ENCODE measurements at regions of chr19 and their contacts with region 1.

Region 1: DNA sequence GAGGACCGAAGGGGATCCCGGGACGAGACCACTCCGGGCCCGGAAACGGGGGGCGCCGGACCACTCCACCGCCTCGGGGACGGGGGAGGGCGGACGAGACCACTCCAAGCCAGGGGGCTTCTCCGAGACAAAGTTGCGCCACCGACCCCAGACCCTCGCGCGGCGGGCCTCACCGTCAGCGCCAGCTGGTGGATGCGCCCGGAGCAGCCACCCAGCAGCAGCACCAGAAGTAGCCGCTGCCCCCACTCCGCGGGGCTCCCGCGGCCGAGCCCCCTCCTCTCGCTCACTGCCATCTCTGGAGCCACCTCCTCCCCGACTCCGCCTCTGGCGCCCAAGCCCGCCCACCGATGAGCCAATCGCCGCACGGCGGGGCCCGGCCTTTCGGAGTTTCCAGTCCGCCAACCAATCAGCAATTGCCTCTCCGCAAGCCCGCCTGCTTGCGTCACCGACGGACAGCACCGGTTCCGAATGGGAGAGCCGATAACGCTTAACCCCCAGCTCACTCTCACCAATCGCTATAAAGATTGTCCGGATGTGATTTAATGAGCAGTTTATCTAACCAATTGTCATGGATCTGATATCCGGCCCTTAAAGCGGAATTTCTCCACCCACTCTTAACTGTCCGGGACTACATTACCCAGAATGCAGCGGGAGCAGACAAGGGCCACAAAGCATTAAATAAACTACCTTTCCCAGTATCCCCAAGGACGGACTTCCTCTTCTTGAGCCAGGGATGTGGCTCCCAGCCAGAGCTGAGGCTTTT is at the start of gene GPR108:
- DNase-seq: peak; percentile 100
- ATAC-seq: peak; percentile 75
- H3K4me3 ChIP-seq: peak within 1 kb of the TSS; percentile 58
- H3K27ac ChIP-seq: peak within 1 kb of the TSS; percentile 89
- H3K4me1 ChIP-seq: peaks cover 13% of the 10 kb centered on the region
- H3K27me3 ChIP-seq: no peaks in the 10 kb centered on the region
- CTCF ChIP-seq: no peak
- POLR2A ChIP-seq: no peak
- RAD21 ChIP-seq: no peak
- total RNA-seq, gene GPR108: 17.5 and 28.0 TPM in 2 replicates

Region 2: DNA sequence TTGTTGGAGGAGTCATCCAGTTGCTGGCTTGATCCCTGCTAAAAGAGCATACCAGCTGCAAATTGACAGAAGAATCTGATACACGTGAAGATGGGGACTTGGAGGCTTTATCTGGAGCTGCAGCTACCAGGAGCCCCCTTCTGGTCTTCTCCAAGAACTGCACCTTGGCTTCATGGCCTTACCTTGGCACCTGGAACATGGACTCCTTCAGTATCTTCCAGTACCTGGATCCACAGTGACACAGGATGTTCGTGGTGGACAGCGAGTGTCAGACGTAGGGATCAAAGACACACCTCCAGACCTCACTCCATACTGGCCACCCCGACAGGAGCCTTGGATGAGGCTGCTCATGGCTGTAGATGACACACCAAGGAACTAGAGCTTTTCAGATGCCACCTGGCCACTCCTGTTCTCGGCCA is 611.9 kb before region 1 on chr19:
- CTCF ChIA-PET with region 1: no interaction called
- POLR2A ChIA-PET with region 1: no interaction called
- dilution Hi-C with region 1: no loop called
- in situ Hi-C with region 1: no loop called
- intact Hi-C with region 1: loop called (anchors 5 kb)
- DNase-seq: peak; percentile 77
- ATAC-seq: peak; percentile 78
- H3K4me3 ChIP-seq: no peak overlapping the region
- H3K27ac ChIP-seq: no peak overlapping the region
- H3K4me1 ChIP-seq: no peaks in the 10 kb centered on the region
- H3K27me3 ChIP-seq: no peaks in the 10 kb centered on the region
- CTCF ChIP-seq: peak; percentile 88
- POLR2A ChIP-seq: no peak
- RAD21 ChIP-seq: peak; percentile 98

Region 3: DNA sequence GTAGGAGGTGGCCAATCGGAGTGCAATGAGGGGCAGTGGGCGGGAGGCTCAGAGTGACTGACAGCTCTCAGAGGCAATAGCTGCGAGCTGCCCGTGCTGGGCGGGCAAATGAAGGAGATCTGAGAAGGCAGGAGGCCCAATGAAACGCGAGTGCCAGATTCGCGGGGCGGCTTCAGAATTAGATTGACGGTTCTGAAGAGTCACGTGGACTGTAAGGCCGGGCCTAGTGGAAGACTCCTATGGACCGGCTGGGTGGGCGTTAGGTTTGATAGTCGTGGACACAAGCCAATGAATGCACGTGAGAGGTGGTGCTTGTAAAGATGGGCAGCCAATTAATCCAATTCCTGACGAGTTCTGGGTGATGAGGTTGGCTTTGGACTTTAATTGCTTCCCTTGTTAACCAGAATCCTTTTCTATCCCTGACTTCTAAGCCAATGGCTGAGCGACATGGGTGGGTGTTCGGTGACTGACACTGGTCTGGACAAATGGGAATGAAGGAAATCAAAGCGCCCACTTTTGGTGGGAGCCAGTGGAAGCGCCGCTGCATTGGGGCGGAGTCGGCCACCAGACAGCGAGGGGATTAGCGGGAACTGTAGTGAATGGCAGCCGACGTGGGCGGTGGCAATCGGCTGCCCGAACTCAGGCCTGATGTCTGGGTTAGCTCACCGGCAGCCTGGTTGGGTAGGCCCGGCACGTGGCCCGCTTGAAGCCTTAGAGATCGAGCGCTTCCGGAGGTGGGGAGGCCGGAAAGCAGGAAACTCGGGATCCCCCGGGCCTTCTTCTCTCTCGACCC is 312.3 kb before region 1 on chr19:
- CTCF ChIA-PET with region 1: no interaction called
- POLR2A ChIA-PET with region 1: no interaction called
- dilution Hi-C with region 1: no loop called
- in situ Hi-C with region 1: no loop called
- intact Hi-C with region 1: loop called (anchors 2 kb)
- DNase-seq: peak; percentile 100
- ATAC-seq: peak; percentile 89
- H3K4me3 ChIP-seq: no peak overlapping the region
- H3K27ac ChIP-seq: peak overlapping the region; percentile 40
- H3K4me1 ChIP-seq: peaks cover 2% of the 10 kb centered on the region; the same call in 1 of the 2 replicates
- H3K27me3 ChIP-seq: peaks cover 7% of the 10 kb centered on the region; the same call in 1 of the 2 replicates
- CTCF ChIP-seq: no peak
- POLR2A ChIP-seq: no peak
- RAD21 ChIP-seq: no peak

Region 4: GRCh38 chr19:6516659-6517291 is 220.7 kb before region 1 on chr19:
- CTCF ChIA-PET with region 1: interaction called, 3 read pairs
- POLR2A ChIA-PET with region 1: no interaction called
- dilution Hi-C with region 1: no loop called
- in situ Hi-C with region 1: loop called (anchors 10 kb)
- intact Hi-C with region 1: loop called (anchors 2 kb)
- DNase-seq: peak; percentile 62
- ATAC-seq: peak; percentile 86
- H3K4me3 ChIP-seq: peak overlapping the region; percentile 48
- H3K27ac ChIP-seq: no peak overlapping the region
- H3K4me1 ChIP-seq: no peaks in the 10 kb centered on the region
- H3K27me3 ChIP-seq: no peaks in the 10 kb centered on the region
- CTCF ChIP-seq: peak; percentile 91
- POLR2A ChIP-seq: peak; percentile 24; the same call in 1 of the 2 replicates
- RAD21 ChIP-seq: peak; percentile 86

Region 5: GRCh38 chr19:6632002-6632621 is 105.4 kb before region 1 on chr19:
- CTCF ChIA-PET with region 1: no interaction called
- POLR2A ChIA-PET with region 1: no interaction called
- dilution Hi-C with region 1: no loop called
- in situ Hi-C with region 1: no loop called
- intact Hi-C with region 1: loop called (anchors 1 kb)
- DNase-seq: peak; percentile 64
- ATAC-seq: peak; percentile 90
- H3K4me3 ChIP-seq: no peak overlapping the region
- H3K27ac ChIP-seq: no peak overlapping the region
- H3K4me1 ChIP-seq: no peaks in the 10 kb centered on the region
- H3K27me3 ChIP-seq: no peaks in the 10 kb centered on the region
- CTCF ChIP-seq: peak; percentile 71
- POLR2A ChIP-seq: no peak
- RAD21 ChIP-seq: peak; percentile 66

Region 6: DNA sequence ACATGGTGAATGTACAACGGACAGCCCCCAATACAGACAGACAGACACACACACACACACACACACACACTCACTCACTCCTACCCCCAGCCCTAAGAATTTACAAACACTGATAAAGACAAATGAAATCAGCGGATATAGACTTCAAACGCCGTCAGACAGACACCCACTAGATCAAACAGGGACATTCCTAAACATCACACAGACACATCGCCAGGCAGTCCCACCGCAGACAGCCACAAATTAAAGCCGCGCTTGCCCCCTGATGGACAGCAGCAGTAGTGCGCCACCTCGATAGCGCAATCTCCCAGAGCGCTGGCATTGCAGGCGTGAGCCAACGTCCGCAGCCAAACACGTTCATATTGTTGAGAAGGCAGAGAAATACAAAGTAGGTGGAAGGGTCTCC is 125.2 kb after region 1 on chr19:
- CTCF ChIA-PET with region 1: interaction called, 25 read pairs
- POLR2A ChIA-PET with region 1: no interaction called
- dilution Hi-C with region 1: no loop called
- in situ Hi-C with region 1: loop called (anchors 10 kb)
- intact Hi-C with region 1: loop called (anchors 1 kb)
- DNase-seq: peak; percentile 69
- ATAC-seq: peak; percentile 91
- H3K4me3 ChIP-seq: no peak overlapping the region
- H3K27ac ChIP-seq: no peak overlapping the region
- H3K4me1 ChIP-seq: no peaks in the 10 kb centered on the region
- H3K27me3 ChIP-seq: no peaks in the 10 kb centered on the region
- CTCF ChIP-seq: peak; percentile 88
- POLR2A ChIP-seq: no peak
- RAD21 ChIP-seq: peak; percentile 84

Measured in IMR-90 (cell line).